Activated T-helper 1 cell treated with anti-CD3 and anti-CD28 coated beads, Interleukin-12 subunit alpha, Interleukin-12 subunit beta, Interleukin-2, Interleukin-4 antibody, amounts not matched to agents 30 ng/mL and 10 ng/mL and 1 ng/mL, durations not matched to agents 14 hours and 24 hours and 36 hours (primary cell): ENCODE measurements at regions of chr1 and their contacts with region 1.

Region 1: GRCh38 chr1:185363205-185363604 is 46.2 kb upstream of the IVNS1ABP start:
- DNase-seq: no peak
- H3K4me3 Mint-ChIP-seq: no peak overlapping the region
- H3K27ac Mint-ChIP-seq: no peak overlapping the region
- H3K4me1 Mint-ChIP-seq: peaks cover 27% of the 10 kb centered on the region
- H3K27me3 Mint-ChIP-seq: peaks cover 6% of the 10 kb centered on the region

Region 2: GRCh38 chr1:185351734-185352466 is 11.3 kb before region 1 on chr1:
- intact Hi-C with region 1: loop called (anchors 1 kb)
- DNase-seq: no peak
- H3K4me3 Mint-ChIP-seq: no peak overlapping the region
- H3K27ac Mint-ChIP-seq: no peak overlapping the region
- H3K4me1 Mint-ChIP-seq: peaks cover 18% of the 10 kb centered on the region
- H3K27me3 Mint-ChIP-seq: no peaks in the 10 kb centered on the region